ENCODE measurements at regions of chr12 and their contacts with region 1.

Region 1: DNA sequence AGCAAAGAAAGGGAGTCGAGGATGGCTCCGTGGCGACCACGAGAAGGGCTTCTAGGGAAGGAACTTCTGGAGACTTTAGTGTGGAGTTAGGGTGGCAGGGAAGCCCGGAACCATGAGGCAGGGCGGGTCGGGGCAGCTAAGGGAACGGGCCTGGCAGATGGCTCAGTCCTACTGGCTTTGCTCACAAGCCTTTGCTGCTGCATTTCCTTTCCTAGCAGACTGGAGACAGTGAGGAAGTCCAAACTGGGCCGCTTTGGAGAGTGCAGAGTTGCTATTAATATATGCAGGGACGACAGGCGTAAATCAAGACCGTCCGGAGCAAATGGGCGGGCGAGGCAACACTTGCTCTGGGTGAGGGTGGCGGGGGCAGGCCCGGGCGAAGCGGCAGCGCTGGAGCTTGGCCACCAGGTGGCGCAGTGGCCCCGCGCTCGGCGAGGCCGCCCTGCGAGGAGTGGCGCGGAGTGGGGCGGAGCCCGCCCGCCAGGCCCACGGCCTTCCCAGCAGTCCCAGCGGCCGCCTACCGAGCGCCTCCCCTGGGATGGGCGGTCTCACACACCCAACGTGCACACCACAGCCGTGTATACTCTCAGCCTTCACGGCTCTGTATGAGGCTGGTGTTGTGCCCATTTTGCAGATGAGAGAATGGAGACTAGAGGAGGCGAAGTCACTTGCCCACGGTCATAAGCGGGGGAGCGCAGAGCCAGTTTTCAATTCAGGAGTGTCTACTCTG is 24.4 kb upstream of the LRTM2 start:
- DNase-seq: peak; percentile 82
- H3K4me3 ChIP-seq: peak overlapping the region; percentile 51
- H3K27ac ChIP-seq: no peak overlapping the region
- H3K27me3 ChIP-seq: no peaks in the 10 kb centered on the region
- CTCF ChIP-seq: peak; percentile 65

Region 2: GRCh38 chr12:1583421-1584078 is 212.4 kb before region 1 on chr12:
- in situ Hi-C with region 1: no loop called
- DNase-seq: peak; percentile 67
- H3K4me3 ChIP-seq: peak overlapping the region; percentile 13
- H3K27ac ChIP-seq: no peak overlapping the region
- H3K27me3 ChIP-seq: no peaks in the 10 kb centered on the region
- CTCF ChIP-seq: peak; percentile 89

Region 3: GRCh38 chr12:1661553-1662335 is 134.2 kb before region 1 on chr12:
- in situ Hi-C with region 1: loop called (anchors 25 kb)
- DNase-seq: peak; percentile 54
- H3K4me3 ChIP-seq: peak overlapping the region; percentile 56
- H3K27ac ChIP-seq: no peak overlapping the region
- H3K27me3 ChIP-seq: no peaks in the 10 kb centered on the region
- CTCF ChIP-seq: no peak